ENCODE measurements at regions of chr17 and their contacts with region 1.

Region 1: GRCh38 chr17:5592382-5592781 is 8.1 kb upstream of the NLRP1 start:
- DNase-seq: no peak
- ATAC-seq: peak in 4 of 8 donors; percentile 24 to 48 (median 42)
- H3K4me3 ChIP-seq: no peak overlapping the region
- H3K27ac ChIP-seq: no peak overlapping the region
- H3K4me1 ChIP-seq: no peaks in the 10 kb centered on the region
- H3K27me3 ChIP-seq: peaks cover 0 to 62% (median 45%) of the 10 kb centered on the region in 7 donors
- CTCF ChIP-seq: peak; percentile 42 to 71 (median 60)

Region 2: DNA sequence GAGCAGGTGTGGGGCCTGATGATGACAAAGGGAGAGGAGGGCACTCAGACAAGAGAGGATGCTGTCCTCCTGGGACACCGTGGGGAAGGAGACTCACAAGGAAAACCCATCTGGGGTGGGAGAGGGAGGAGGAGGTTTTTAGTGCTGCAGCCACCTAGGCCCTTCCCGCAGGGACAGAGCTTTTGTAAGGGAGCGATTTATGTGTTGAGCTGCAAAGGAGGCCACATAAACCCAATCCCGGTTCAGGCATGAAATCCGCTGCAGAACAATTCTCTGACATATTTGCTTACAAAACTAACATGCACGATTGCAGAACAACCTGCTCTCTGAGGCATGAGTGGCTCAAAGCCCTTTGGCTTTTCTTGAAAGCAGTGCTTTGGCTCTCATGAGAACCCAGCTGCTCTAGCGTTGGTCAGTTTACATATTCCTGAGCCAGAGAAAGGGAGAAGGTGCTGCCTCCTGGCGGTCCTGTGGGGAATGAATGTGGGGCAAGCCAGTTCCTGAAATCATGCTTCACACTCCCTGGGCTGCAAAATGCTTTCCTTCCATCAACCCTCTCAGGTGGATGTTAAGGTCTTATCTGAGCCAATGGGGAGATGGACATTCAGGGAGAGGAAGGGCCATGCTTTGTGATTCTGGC is 114.3 kb after region 1 on chr17:
- intact Hi-C with region 1: loop called in 9 of 10 experiments (anchors 2 to 10 kb)
- DNase-seq: peak; percentile 20 to 43
- ATAC-seq: peak in 1 of 8 donors; percentile 44
- H3K4me3 ChIP-seq: no peak overlapping the region
- H3K27ac ChIP-seq: no peak overlapping the region
- H3K4me1 ChIP-seq: no peaks in the 10 kb centered on the region
- H3K27me3 ChIP-seq: peaks cover 0 to 56% (median 19%) of the 10 kb centered on the region in 7 donors
- CTCF ChIP-seq: peak in 8 of 9 donors; percentile 20 to 72 (median 57)

Region 3: GRCh38 chr17:5769593-5770354 is 177.4 kb after region 1 on chr17:
- intact Hi-C with region 1: no loop called
- DNase-seq: no peak
- ATAC-seq: no peak
- H3K4me3 ChIP-seq: no peak overlapping the region
- H3K27ac ChIP-seq: no peak overlapping the region
- H3K4me1 ChIP-seq: no peaks in the 10 kb centered on the region
- H3K27me3 ChIP-seq: peaks cover 0 to 88% (median 26%) of the 10 kb centered on the region in 7 donors
- CTCF ChIP-seq: no peak

Region 4: DNA sequence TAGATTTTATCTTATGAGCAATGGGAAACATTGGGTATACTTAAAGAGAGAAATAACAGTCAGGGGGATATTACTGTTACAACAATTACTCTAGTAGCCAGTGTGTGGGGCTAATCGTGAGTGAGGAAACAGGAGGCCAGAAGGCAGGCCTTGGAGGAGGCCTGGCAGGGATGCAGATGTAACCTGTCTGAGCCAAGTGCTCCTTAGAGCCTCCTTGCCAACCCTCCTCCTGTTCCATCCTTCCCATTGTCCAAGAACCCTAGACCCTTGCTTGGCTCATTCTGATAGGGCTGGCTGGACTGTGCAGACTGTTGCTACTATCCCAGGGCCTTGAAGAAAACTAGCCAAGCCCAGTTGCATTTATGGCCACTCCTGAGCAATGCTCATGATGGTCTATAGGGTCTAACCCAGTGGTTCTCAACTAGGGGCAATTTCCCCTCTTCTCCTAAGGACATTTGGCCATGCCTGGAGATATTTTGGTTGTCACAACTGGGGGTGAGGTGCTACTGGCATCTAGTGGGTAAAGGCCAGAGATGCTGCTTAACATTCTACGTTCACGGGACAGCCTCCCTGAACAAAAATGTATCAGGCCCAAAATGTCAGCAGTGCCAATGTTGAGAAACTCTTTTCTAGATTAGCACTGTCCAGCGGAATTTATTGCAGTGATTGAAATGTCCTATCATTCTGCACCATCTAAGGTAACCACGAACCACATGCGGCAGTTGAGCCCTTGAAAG is 453.4 kb after region 1 on chr17:
- intact Hi-C with region 1: loop called in 2 of 10 experiments (anchors 5 to 10 kb)
- DNase-seq: no peak
- ATAC-seq: no peak
- H3K4me3 ChIP-seq: no peak overlapping the region
- H3K27ac ChIP-seq: no peak overlapping the region
- H3K4me1 ChIP-seq: peaks cover 0 to 3% (median 0%) of the 10 kb centered on the region in 9 donors
- H3K27me3 ChIP-seq: peaks cover 0 to 6% (median 0%) of the 10 kb centered on the region in 7 donors
- CTCF ChIP-seq: peak in 3 of 9 donors; percentile 13 to 32 (median 23)

Region 5: GRCh38 chr17:6069539-6070429 is 477.4 kb after region 1 on chr17 and contains the start of gene WSCD1:
- intact Hi-C with region 1: loop called in 2 of 10 experiments (anchors 10 kb)
- DNase-seq: peak in 1 of 2 donors; percentile 42
- ATAC-seq: peak; percentile 27 to 81 (median 66)
- H3K4me3 ChIP-seq: peak within 1 kb of the TSS; percentile 38 to 81 (median 63)
- H3K27ac ChIP-seq: peak within 1 kb of the TSS in 5 of 10 donors; percentile 12 to 64 (median 44)
- H3K4me1 ChIP-seq: peaks cover 0 to 12% (median 7%) of the 10 kb centered on the region in 9 donors
- H3K27me3 ChIP-seq: peaks cover 0 to 52% (median 32%) of the 10 kb centered on the region in 7 donors
- CTCF ChIP-seq: no peak
- total RNA-seq, gene WSCD1: 3.4 to 13.8 (median 4.2) TPM

Region 6: GRCh38 chr17:6421700-6422604 is 829.6 kb after region 1 on chr17:
- intact Hi-C with region 1: loop called (anchors 1 to 5 kb)
- DNase-seq: peak; percentile 75 to 76
- ATAC-seq: peak; percentile 70 to 93 (median 86)
- H3K4me3 ChIP-seq: no peak overlapping the region
- H3K27ac ChIP-seq: no peak overlapping the region
- H3K4me1 ChIP-seq: no peaks in the 10 kb centered on the region
- H3K27me3 ChIP-seq: peaks cover 0 to 45% (median 15%) of the 10 kb centered on the region in 7 donors
- CTCF ChIP-seq: peak; percentile 74 to 93 (median 88)

Measured in heart right ventricle (tissue), 16 donors.